Activated T-helper 1 cell treated with anti-CD3 and anti-CD28 coated beads, Interleukin-12 subunit alpha, Interleukin-12 subunit beta, Interleukin-2, Interleukin-4 antibody, amounts not matched to agents 30 ng/mL and 10 ng/mL and 1 ng/mL, durations not matched to agents 14 hours and 24 hours and 36 hours (primary cell): ENCODE measurements at regions of chrX and their contacts with region 1.

Region 1: GRCh38 chrX:153724252-153725040 is at the starts of genes ABCD1 and BCAP31:
- DNase-seq: peak; percentile 86
- H3K4me3 Mint-ChIP-seq: peak within 1 kb of the TSS; percentile 92
- H3K27ac Mint-ChIP-seq: peak within 1 kb of the TSS; percentile 85
- H3K4me1 Mint-ChIP-seq: peaks cover 17% of the 10 kb centered on the region
- H3K27me3 Mint-ChIP-seq: no peaks in the 10 kb centered on the region
- total RNA-seq, gene ABCD1: 8.4 TPM in 2 replicates
- total RNA-seq, gene BCAP31: 156 and 166 TPM in 2 replicates

Region 2: GRCh38 chrX:153599192-153600031 is 125.0 kb before region 1 on chrX:
- intact Hi-C with region 1: loop called (anchors 1 kb)
- DNase-seq: peak; percentile 87
- H3K4me3 Mint-ChIP-seq: peak overlapping the region; percentile 89
- H3K27ac Mint-ChIP-seq: peak overlapping the region; percentile 59
- H3K4me1 Mint-ChIP-seq: peaks cover 30% of the 10 kb centered on the region
- H3K27me3 Mint-ChIP-seq: peaks cover 1% of the 10 kb centered on the region

Region 3: GRCh38 chrX:153794018-153794896 is 69.8 kb after region 1 on chrX and contains the starts of genes IDH3G and SSR4:
- intact Hi-C with region 1: loop called (anchors 1 kb)
- DNase-seq: peak; percentile 91
- H3K4me3 Mint-ChIP-seq: peak within 1 kb of the TSS; percentile 96
- H3K27ac Mint-ChIP-seq: peak within 1 kb of the TSS; percentile 94
- H3K4me1 Mint-ChIP-seq: peaks cover 18% of the 10 kb centered on the region
- H3K27me3 Mint-ChIP-seq: no peaks in the 10 kb centered on the region
- total RNA-seq, gene IDH3G: 68.4 and 69.7 TPM in 2 replicates
- total RNA-seq, gene SSR4: 281 and 285 TPM in 2 replicates

Region 4: GRCh38 chrX:154397819-154398724 is 673.6 kb after region 1 on chrX and contains the start of gene RPL10:
- intact Hi-C with region 1: loop called (anchors 10 kb)
- DNase-seq: peak; percentile 91
- H3K4me3 Mint-ChIP-seq: peak within 1 kb of the TSS; percentile 98
- H3K27ac Mint-ChIP-seq: peak within 1 kb of the TSS; percentile 99
- H3K4me1 Mint-ChIP-seq: peaks cover 8% of the 10 kb centered on the region
- H3K27me3 Mint-ChIP-seq: no peaks in the 10 kb centered on the region
- total RNA-seq, gene RPL10: 2,208 and 2,261 TPM in 2 replicates

Region 5: DNA sequence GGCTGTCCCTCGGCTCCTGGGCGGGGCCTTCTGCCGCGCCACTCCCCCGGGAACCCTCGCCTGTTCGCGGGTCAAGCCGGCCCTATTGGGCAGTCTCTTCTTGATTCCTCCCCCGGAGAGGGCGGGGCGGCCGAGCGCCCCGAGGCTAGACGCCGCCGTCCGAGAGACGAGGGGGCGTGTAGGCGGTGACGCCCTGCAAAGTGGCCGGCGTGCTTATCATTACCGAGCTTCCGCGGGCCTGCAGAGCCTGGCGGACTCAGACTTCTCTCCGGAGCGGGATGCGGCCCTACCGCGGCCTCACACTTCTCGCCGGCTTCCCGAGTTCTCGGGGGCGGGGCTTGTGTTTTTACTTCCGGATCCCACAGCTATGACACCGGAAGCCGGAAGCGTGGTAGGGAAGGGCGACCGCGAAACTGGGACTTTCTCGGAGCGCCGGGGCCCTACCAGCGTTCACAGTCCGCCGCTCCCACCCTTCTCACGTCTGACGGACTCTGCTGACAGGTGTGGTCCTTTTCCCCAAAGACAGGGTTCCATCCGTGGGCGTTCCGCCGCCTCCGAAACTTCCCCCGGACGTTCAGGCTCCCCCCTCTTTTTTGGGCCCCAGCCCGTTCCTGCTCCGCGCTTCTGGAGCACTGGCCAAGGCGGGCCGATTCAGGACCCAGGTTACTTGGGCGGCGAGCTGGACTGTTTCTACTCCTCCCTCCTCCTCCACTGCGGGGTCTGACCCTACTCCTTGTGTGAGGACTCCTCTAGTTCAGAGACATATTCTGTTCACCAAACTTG is 823.0 kb after region 1 on chrX and contains the start of gene IKBKG:
- intact Hi-C with region 1: loop called (anchors 1 kb)
- DNase-seq: peak; percentile 86
- H3K4me3 Mint-ChIP-seq: peak within 1 kb of the TSS; percentile 96
- H3K27ac Mint-ChIP-seq: peak within 1 kb of the TSS; percentile 98
- H3K4me1 Mint-ChIP-seq: peaks cover 33% of the 10 kb centered on the region
- H3K27me3 Mint-ChIP-seq: no peaks in the 10 kb centered on the region
- total RNA-seq, gene IKBKG: 40.7 and 41.2 TPM in 2 replicates